HCT116 (cell line): ENCODE measurements at regions of chr3 and their contacts with region 1.

Region 1: GRCh38 chr3:56801662-56802377 is at the start of gene ARHGEF3:
- DNase-seq: peak; percentile 72
- ATAC-seq: peak; percentile 93
- H3K4me3 ChIP-seq: peak within 1 kb of the TSS; percentile 41 to 64
- H3K27ac ChIP-seq: peak within 1 kb of the TSS; percentile 45; the same call in 1 of the 2 replicates
- H3K4me1 ChIP-seq: peaks cover 16 to 27% of the 10 kb centered on the region in 2 experiments
- H3K27me3 ChIP-seq: no peaks in the 10 kb centered on the region
- CTCF ChIP-seq: peak; percentile 46 to 77 (median 64)
- POLR2A ChIP-seq: peak; percentile 57
- RAD21 ChIP-seq: peak; percentile 59
- total RNA-seq, gene ARHGEF3: 18.1 TPM

Region 2: GRCh38 chr3:56222866-56223265 is 579.0 kb before region 1 on chr3:
- CTCF ChIA-PET with region 1: no interaction called
- POLR2A ChIA-PET with region 1: no interaction called
- RAD21 ChIA-PET with region 1: no interaction called
- intact Hi-C with region 1: no loop called
- DNase-seq: no peak
- ATAC-seq: no peak
- H3K4me3 ChIP-seq: no peak overlapping the region
- H3K27ac ChIP-seq: no peak overlapping the region
- H3K4me1 ChIP-seq: no peaks in the 10 kb centered on the region
- H3K27me3 ChIP-seq: peaks cover 4% of the 10 kb centered on the region; the same call in 1 of the 2 replicates
- CTCF ChIP-seq: no peak
- POLR2A ChIP-seq: no peak
- RAD21 ChIP-seq: no peak

Region 3: DNA sequence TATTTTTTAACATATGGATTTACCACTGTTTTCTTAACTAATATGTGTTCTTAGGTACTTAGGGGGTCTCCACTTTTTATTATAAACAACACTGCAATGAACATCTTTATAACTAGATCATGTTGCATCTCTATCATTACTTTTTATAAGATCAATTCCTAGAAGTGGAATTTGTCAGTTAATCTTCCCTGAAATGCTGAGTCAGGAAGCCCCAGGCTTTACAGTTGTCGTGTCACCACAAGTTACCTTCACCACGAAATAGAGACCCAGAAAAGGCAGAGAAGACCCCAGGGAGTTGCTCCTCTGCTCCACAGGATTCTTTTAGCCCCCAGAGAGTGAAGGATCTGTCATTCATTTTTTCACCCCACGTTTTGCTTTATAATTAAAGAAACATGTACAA is 299.1 kb before region 1 on chr3:
- CTCF ChIA-PET with region 1: no interaction called
- POLR2A ChIA-PET with region 1: no interaction called
- RAD21 ChIA-PET with region 1: no interaction called
- intact Hi-C with region 1: no loop called
- DNase-seq: no peak
- ATAC-seq: no peak
- H3K4me3 ChIP-seq: no peak overlapping the region
- H3K27ac ChIP-seq: no peak overlapping the region
- H3K4me1 ChIP-seq: no peaks in the 10 kb centered on the region
- H3K27me3 ChIP-seq: peaks cover 17% of the 10 kb centered on the region
- CTCF ChIP-seq: no peak
- POLR2A ChIP-seq: no peak
- RAD21 ChIP-seq: no peak

Region 4: DNA sequence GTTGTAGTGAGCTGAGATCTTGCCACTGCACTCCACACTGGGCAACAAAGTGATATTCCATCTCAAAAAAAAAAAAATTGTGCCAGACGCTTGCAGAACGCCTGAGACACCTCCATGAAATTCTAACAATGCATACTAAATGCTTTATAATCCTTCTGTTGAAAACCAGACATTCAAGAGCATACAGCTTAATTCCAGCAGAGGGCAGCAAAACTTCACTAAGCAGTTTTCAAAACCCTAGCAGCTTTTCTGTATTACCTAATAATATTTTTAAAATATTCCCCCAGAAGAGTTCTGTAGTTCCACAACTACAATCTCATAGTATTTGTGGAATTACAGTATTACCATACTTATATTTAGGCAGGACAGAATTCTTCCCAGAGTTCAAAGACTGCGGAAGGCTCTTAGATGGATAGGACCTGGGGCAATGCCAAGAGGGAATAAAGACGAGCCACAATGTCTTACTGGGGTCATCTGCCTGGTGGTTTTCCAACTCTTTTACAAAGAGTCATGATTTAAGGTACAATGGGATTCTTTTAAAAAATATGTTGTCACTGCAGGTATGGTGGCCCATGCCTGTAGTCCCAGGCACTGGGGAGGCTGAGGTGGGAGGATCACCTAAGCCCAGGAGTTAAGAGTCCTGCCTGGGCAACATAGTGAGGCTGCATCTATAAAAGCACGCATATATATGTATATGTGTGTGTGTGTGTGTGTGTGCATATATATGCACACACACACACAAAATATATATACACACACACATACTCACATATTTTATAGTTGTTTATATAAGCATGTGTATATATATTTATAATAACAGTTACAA is 99.1 kb before region 1 on chr3:
- CTCF ChIA-PET with region 1: interaction called, 29 read pairs
- POLR2A ChIA-PET with region 1: no interaction called
- RAD21 ChIA-PET with region 1: interaction called in 1 of 2 experiments, 5 read pairs
- intact Hi-C with region 1: loop called (anchors 2 kb)
- DNase-seq: peak; percentile 61
- ATAC-seq: peak; percentile 86
- H3K4me3 ChIP-seq: no peak overlapping the region
- H3K27ac ChIP-seq: no peak overlapping the region
- H3K4me1 ChIP-seq: peaks cover 0 to 6% of the 10 kb centered on the region in 2 experiments; a peak in 1 of 4 replicates
- H3K27me3 ChIP-seq: no peaks in the 10 kb centered on the region
- CTCF ChIP-seq: peak; percentile 74 to 92 (median 83)
- POLR2A ChIP-seq: no peak
- RAD21 ChIP-seq: peak; percentile 96

Region 5: DNA sequence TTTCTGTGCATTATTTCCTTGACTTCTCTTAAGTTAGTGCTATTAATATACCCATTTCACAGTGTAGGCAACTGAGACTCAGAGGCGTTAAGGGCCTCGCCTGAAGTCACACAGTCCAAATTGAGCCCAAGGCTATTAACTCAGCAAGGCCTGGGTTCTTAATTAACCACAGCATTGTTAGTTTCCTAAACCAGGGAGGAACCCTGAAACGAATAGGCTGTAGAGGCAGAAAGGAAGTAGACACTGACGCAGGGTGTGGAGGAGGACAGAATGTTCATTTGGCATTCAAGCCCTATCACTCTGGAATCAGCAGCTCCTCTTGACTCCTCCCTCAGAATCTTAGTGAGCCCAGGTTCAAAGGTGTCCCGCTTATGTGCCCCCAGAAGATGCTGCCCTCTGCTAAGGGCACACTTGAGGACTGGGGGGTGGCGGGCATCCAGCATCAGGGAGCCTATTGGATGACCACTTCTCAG is 14.0 kb before region 1 on chr3:
- CTCF ChIA-PET with region 1: interaction called, 19 read pairs
- POLR2A ChIA-PET with region 1: interaction called, 5 read pairs
- RAD21 ChIA-PET with region 1: no interaction called
- intact Hi-C with region 1: no loop called
- DNase-seq: no peak
- ATAC-seq: no peak
- H3K4me3 ChIP-seq: no peak overlapping the region
- H3K27ac ChIP-seq: no peak overlapping the region
- H3K4me1 ChIP-seq: peaks cover 11 to 19% of the 10 kb centered on the region in 2 experiments
- H3K27me3 ChIP-seq: no peaks in the 10 kb centered on the region
- CTCF ChIP-seq: no peak
- POLR2A ChIP-seq: no peak
- RAD21 ChIP-seq: no peak

Region 6: GRCh38 chr3:57169872-57170623 is 368.2 kb after region 1 on chr3:
- CTCF ChIA-PET with region 1: no interaction called
- POLR2A ChIA-PET with region 1: no interaction called
- RAD21 ChIA-PET with region 1: no interaction called
- intact Hi-C with region 1: no loop called
- DNase-seq: peak; percentile 64
- ATAC-seq: peak; percentile 88
- H3K4me3 ChIP-seq: peak overlapping the region; percentile 52 to 63
- H3K27ac ChIP-seq: peak overlapping the region; percentile 18; the same call in 1 of the 2 replicates
- H3K4me1 ChIP-seq: peaks cover 3 to 20% of the 10 kb centered on the region in 2 experiments; a peak in 3 of 4 replicates
- H3K27me3 ChIP-seq: no peaks in the 10 kb centered on the region
- CTCF ChIP-seq: peak; percentile 78 to 85 (median 78)
- POLR2A ChIP-seq: no peak
- RAD21 ChIP-seq: peak; percentile 95